A549 (cell line): ENCODE measurements at regions of chr2 and their contacts with region 1.

Region 1: GRCh38 chr2:31151501-31151900 is 13.3 kb upstream of the GALNT14 start:
- DNase-seq: peak in 1 of 2 experiments; percentile 26
- ATAC-seq: peak; percentile 72 to 76; a peak in 5 of 6 replicates
- H3K4me3 ChIP-seq: no peak overlapping the region
- H3K27ac ChIP-seq: no peak overlapping the region
- H3K4me1 ChIP-seq: peaks cover 8% of the 10 kb centered on the region; the same call in 2 of the 3 replicates
- CTCF ChIP-seq: peak; percentile 20; the same call in 1 of the 3 replicates
- EP300 ChIP-seq: no peak
- POLR2A ChIP-seq: no peak
- RAD21 ChIP-seq: peak; percentile 29 to 35; a peak in 4 of 5 replicates

Region 2: DNA sequence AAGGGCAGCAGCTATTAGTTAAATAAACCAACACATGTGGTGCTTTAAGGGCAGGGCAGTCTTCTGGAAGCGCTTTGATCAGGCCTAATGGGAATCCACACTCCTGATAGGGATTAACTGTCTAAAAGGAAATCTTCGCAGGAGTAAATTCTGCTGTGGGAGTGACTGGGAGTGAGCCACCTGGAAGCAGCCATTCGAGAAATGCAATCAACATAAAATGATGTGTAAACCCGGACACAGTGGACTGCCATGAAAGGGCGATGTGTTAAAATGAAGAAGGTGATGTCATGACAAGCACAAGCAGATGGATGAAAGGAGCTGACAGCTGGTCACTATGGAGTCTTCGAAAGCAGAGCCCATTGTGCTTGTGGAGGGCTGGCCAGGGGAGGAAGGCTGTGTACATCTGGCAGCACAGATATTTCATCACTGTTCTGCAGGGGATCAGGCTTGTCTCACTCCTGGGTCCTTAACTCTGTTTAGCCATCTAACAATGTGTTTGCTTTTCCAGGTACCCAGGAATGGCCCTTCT is 11.6 kb after region 1 on chr2:
- CTCF ChIA-PET with region 1: interaction called, 29 read pairs
- POLR2A ChIA-PET with region 1: no interaction called
- DNase-seq: no peak
- ATAC-seq: no peak
- H3K4me3 ChIP-seq: no peak overlapping the region
- H3K27ac ChIP-seq: no peak overlapping the region
- H3K4me1 ChIP-seq: no peaks in the 10 kb centered on the region
- CTCF ChIP-seq: no peak
- EP300 ChIP-seq: no peak
- POLR2A ChIP-seq: no peak
- RAD21 ChIP-seq: no peak

Region 3: DNA sequence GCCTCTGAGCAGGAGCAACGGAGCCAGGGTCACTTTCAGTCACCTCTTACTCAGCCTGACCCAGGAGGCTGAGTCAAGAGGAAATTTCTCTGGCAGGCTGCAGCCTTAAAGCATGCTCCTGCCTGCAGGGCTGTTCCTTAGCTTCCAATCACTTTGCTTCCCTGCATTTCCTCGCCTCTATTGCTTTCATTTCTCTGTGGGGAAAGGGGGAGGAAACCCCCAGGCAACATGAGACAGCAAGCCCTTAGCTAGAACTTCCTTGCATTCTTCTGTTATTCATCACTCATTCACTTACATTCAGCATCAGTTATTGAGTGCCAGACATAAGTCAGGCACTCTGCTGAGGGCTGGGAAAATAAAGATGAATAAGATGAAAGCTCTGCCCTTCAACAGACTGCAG is 250.1 kb after region 1 on chr2:
- CTCF ChIA-PET with region 1: no interaction called
- POLR2A ChIA-PET with region 1: no interaction called
- DNase-seq: peak; percentile 81 to 95
- ATAC-seq: peak; percentile 95 to 96
- H3K4me3 ChIP-seq: no peak overlapping the region
- H3K27ac ChIP-seq: peak overlapping the region; percentile 84 to 89
- H3K4me1 ChIP-seq: peaks cover 54% of the 10 kb centered on the region
- CTCF ChIP-seq: no peak
- EP300 ChIP-seq: peak; percentile 82 to 84; a peak in 3 of 5 replicates
- POLR2A ChIP-seq: no peak
- RAD21 ChIP-seq: peak in 1 of 2 experiments; percentile 21; a peak in 4 of 5 replicates